ENCODE measurements at regions of chr11 and their contacts with region 1.

Region 1: GRCh38 chr11:18540207-18541009 is 13.7 kb upstream of the TSG101 start:
- DNase-seq: peak; percentile 10
- ATAC-seq: peak; percentile 88
- H3K4me3 ChIP-seq: no peak overlapping the region
- H3K27ac ChIP-seq: no peak overlapping the region
- H3K4me1 ChIP-seq: no peaks in the 10 kb centered on the region
- H3K27me3 ChIP-seq: no peaks in the 10 kb centered on the region
- CTCF ChIP-seq: peak; percentile 58; the same call in 1 of the 2 replicates

Region 2: DNA sequence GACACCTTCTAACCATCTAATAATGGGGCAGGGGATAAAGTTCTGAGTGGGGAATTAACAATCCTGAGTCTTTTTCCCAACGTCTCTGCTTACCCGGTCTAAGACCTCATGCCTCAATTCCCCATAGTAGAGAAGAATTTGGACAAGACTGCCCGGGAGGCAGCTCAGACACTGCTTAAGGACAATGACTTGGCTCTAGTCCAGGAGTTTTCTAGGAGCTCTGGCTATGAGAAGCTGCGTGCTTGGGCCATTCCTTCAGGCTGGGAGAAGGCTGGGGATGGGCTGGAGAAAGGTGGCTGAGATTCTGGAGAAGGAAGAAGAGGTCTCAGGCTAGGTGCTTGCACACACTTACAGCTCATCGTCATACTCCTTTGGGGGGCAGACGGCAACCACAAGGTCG is 1044.0 kb before region 1 on chr11:
- CTCF ChIA-PET with region 1: interaction called, 11 read pairs
- POLR2A ChIA-PET with region 1: no interaction called
- in situ Hi-C with region 1: no loop called
- intact Hi-C with region 1: no loop called
- DNase-seq: no peak
- ATAC-seq: no peak
- H3K4me3 ChIP-seq: no peak overlapping the region
- H3K27ac ChIP-seq: no peak overlapping the region
- H3K4me1 ChIP-seq: no peaks in the 10 kb centered on the region
- H3K27me3 ChIP-seq: peaks cover 3% of the 10 kb centered on the region; the same call in 1 of the 2 replicates
- CTCF ChIP-seq: no peak

Region 3: GRCh38 chr11:18243783-18244362 is 296.5 kb before region 1 on chr11:
- CTCF ChIA-PET with region 1: interaction called, 14 read pairs
- POLR2A ChIA-PET with region 1: no interaction called
- in situ Hi-C with region 1: no loop called
- intact Hi-C with region 1: no loop called
- DNase-seq: peak; percentile 54
- ATAC-seq: peak; percentile 78
- H3K4me3 ChIP-seq: no peak overlapping the region
- H3K27ac ChIP-seq: no peak overlapping the region
- H3K4me1 ChIP-seq: no peaks in the 10 kb centered on the region
- H3K27me3 ChIP-seq: peaks cover 8% of the 10 kb centered on the region; the same call in 1 of the 2 replicates
- CTCF ChIP-seq: peak; percentile 91

Region 4: DNA sequence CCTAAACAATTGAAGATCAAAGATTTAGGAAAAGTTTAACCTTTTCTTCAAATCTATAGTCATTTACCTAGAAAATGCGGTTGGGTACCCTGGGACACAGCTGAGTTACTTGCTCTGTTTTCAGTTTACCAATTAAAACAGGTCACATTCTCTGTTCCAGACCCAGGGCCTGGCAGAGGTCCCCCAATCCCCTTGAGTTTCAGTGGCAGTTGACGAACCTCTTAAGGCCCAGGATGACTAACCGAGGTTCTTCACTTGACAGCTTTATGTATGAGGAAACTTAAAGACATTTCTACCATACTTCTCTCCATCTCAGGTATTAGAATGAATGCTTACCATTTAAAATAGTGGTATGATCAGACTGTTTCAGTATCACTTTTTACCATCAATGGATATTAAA is 68.4 kb before region 1 on chr11:
- CTCF ChIA-PET with region 1: no interaction called
- POLR2A ChIA-PET with region 1: no interaction called
- in situ Hi-C with region 1: no loop called
- intact Hi-C with region 1: no loop called
- DNase-seq: no peak
- ATAC-seq: no peak
- H3K4me3 ChIP-seq: no peak overlapping the region
- H3K27ac ChIP-seq: no peak overlapping the region
- H3K4me1 ChIP-seq: no peaks in the 10 kb centered on the region
- H3K27me3 ChIP-seq: no peaks in the 10 kb centered on the region
- CTCF ChIP-seq: no peak

Region 5: DNA sequence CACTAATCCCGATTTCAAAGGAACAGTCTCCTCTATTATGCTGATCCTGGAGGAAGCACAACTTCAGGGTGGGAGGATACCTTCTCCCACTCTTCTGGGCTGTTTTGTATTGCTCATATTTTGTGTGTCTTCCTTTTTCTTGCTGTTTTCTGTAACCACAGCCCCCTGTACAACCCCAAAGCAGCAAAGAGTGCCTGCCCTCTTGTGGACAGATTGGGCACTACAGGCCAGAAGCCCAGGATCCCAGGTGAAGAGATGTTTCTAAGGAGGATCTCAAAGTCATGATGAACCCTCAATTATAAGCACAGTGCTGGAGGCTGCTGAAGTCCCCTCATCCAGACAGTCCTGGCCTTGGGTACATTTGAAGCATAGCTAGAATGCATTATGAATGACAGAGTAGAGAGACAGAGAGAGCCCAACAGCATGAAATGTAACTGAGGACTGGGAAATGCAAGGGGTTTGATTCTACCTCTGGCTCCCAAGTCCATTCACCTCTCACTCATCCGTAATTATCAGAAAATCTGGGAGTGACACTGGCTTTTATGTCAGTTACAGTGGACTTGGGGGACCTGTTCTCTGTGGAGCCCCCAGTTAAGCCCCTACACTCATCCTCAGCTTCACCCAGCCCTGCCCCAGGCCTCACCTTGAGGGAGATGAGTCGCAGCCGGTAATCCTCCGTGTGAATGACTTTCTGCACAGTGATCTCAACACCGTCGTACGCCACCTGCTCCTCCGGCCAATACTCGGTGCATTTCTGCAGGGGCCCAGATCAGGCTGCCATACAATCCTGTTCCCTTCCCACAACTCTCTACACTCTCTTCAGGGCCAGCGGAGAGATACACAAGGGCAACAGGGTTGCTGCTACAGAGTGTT is 191.8 kb after region 1 on chr11:
- CTCF ChIA-PET with region 1: interaction called, 5 read pairs
- POLR2A ChIA-PET with region 1: no interaction called
- in situ Hi-C with region 1: no loop called
- intact Hi-C with region 1: loop called (anchors 10 kb)
- DNase-seq: peak; percentile 38
- ATAC-seq: peak; percentile 77
- H3K4me3 ChIP-seq: no peak overlapping the region
- H3K27ac ChIP-seq: no peak overlapping the region
- H3K4me1 ChIP-seq: no peaks in the 10 kb centered on the region
- H3K27me3 ChIP-seq: no peaks in the 10 kb centered on the region; the same call in 1 of the 2 replicates
- CTCF ChIP-seq: peak; percentile 98

Region 6: DNA sequence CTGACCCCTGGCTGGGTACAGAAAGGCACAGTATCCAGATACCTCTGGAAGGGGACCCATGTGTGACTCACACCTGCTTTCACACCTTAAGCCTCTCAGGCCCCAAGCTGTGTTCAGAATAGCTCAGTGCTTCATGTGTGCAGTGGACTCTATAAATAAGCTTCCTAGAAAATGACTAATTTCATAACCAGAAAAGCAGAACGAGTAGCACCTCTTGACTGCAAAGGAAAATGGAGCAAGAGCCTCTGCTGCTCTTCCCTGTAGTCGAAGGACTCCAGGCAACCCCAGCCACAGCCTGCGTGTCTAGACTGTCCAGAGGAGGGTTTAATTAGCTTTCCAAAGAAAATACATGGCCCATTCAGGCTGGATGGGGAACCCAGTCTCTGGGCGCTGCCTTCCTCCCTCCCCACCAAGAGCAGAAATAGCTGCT is 228.1 kb after region 1 on chr11:
- CTCF ChIA-PET with region 1: interaction called, 6 read pairs
- POLR2A ChIA-PET with region 1: no interaction called
- in situ Hi-C with region 1: no loop called
- intact Hi-C with region 1: loop called (anchors 10 kb)
- DNase-seq: no peak
- ATAC-seq: no peak
- H3K4me3 ChIP-seq: no peak overlapping the region
- H3K27ac ChIP-seq: no peak overlapping the region
- H3K4me1 ChIP-seq: peaks cover 7% of the 10 kb centered on the region; the same call in 1 of the 2 replicates
- H3K27me3 ChIP-seq: no peaks in the 10 kb centered on the region; the same call in 1 of the 2 replicates
- CTCF ChIP-seq: no peak

Measured in Panc1 (cell line).